ENCODE measurements at regions of chr15 and their contacts with region 1.

Region 1: GRCh38 chr15:29139540-29140459 is 129.8 kb downstream of the NSMCE3 start:
- DNase-seq: peak; percentile 47 to 80
- H3K4me3 ChIP-seq: no peak overlapping the region
- H3K4me1 ChIP-seq: no peaks in the 10 kb centered on the region; the same call in 1 of the 2 replicates
- H3K27me3 ChIP-seq: peaks cover 12% of the 10 kb centered on the region

Region 2: DNA sequence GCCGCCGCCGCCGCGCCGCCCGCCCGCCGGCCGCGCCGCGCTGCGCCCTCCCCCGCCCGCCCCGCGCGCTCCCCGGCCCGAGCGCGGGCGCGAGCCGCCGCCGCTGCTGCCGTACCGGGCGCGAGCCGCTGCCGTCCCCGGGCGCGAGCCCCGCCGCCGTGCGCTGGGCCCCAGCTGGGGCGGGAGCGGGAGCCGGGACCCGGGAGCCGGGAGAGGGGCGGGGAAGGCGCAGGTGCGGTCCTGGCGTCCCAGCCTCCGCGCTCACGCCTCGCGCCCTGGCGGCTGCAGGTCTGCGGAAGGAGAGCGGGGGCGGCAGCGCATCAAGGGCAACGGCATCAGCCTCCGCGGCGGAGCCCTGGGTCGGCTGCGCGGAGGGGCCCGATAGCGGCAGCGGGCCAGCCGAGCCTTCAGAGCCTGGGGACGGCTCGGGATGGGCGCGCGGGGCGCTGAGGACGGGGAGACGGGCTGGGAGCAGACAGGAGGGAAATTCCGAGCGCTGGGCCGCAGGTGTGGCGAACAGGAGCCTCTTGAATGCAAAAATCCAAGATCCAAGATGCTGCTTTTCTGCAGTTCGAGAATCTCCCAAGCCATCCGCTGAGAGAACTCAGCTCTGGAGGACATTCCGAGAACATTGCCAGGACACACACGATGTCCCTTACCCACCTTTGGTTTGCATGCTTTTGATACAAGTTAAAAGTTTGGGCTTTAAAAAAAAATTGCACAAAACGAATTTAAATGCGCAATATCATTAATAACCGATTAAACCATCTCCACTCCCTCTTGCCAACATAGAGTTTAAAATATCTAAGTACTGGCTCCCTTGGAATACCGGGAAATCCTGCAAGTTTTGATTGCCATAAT is 431.4 kb after region 1 on chr15:
- in situ Hi-C with region 1: loop called (anchors 10 kb)
- DNase-seq: peak; percentile 3 to 48
- H3K4me3 ChIP-seq: peak overlapping the region; percentile 18
- H3K4me1 ChIP-seq: peaks cover 10% of the 10 kb centered on the region
- H3K27me3 ChIP-seq: peaks cover 53% of the 10 kb centered on the region